GM18951 (cell line): ENCODE measurements at regions of chrX and their contacts with region 1.

Region 1: DNA sequence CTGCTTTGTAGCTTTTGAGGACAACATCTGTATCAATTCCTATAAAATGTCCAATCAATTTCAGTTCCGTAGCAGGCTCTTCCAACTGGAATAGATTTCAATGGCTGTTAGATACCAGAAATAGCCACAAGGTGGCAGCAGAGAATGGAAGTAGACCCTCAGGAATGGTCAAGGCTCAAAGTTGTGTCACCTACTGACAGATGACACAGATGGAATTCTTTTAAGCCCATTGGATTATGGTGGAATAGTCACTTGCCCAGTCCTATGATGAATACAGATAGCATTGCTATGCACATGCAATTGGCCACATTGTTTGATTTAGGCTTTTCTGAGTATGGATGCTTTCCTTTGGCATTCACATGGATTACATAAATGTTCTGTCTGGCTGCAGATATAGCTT is 130.4 kb upstream of the RADX start:
- POLR2A ChIP-seq: no peak

Region 2: DNA sequence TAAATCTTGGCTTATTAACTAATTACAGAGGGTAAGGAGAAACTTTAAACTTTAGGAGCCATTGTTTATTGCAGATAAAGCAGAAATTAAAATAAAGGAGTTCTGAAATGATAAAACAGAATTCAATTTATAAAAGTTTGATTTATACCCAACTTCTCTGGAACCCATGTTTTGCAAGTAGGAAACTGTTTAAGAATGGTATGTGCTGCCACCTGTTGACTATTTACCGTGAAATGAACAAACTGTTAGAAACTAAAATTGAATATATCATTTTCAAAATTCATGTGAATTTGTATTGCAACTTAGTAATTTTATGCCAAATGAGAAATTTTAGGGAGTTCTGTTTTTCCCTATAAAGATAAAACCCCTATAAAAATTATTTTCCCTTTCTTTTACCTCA is 310.2 kb after region 1 on chrX:
- in situ Hi-C with region 1: loop called (anchors 25 kb)
- POLR2A ChIP-seq: no peak